CD4-positive, alpha-beta memory T cell (primary cell): ENCODE measurements at regions of chr1 and their contacts with region 1.

Region 1: GRCh38 chr1:161165742-161166668 is at the start of gene PPOX:
- DNase-seq: peak; percentile 95 to 98 (median 96)
- H3K4me3 ChIP-seq: peak within 1 kb of the TSS; percentile 73 to 77
- H3K4me3 Mint-ChIP-seq: peak within 1 kb of the TSS; percentile 89 to 96 (median 94)
- H3K27ac ChIP-seq: peak within 1 kb of the TSS; percentile 83
- H3K27ac Mint-ChIP-seq: peak within 1 kb of the TSS; percentile 96 to 100 (median 100)
- H3K4me1 ChIP-seq: peaks cover 37% of the 10 kb centered on the region
- H3K4me1 Mint-ChIP-seq: peaks cover 25 to 75% (median 45%) of the 10 kb centered on the region in 4 donors
- H3K27me3 ChIP-seq: no peaks in the 10 kb centered on the region
- H3K27me3 Mint-ChIP-seq: no peaks in the 10 kb centered on the region
- total RNA-seq, gene PPOX: 59.4 to 69.8 TPM

Region 2: DNA sequence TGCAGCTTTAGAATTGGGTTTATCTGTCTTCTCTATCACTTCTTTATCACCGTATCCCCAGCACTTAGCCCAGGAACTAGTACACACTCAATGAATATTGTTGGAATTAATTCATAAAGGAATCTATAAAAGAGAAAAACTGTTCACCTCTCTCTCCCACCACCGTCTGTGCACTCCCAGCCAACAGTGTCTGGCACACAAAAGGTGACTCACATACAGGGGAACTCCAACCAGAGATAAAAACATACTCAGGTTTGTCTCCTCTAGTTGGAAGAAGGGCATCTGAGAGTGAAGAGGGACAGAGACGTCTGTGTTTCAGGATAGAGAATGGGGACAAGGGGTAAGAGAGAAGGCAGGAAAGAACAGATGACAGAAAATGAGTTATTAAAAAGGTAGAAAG is 291.1 kb before region 1 on chr1:
- CTCF ChIA-PET with region 1: no interaction called
- POLR2A ChIA-PET with region 1: no interaction called
- intact Hi-C with region 1: no loop called
- DNase-seq: no peak
- H3K4me3 ChIP-seq: no peak overlapping the region
- H3K4me3 Mint-ChIP-seq: no peak overlapping the region
- H3K27ac ChIP-seq: no peak overlapping the region
- H3K27ac Mint-ChIP-seq: peak overlapping the region in 1 of 7 donors; percentile 5
- H3K4me1 ChIP-seq: peaks cover 7% of the 10 kb centered on the region
- H3K4me1 Mint-ChIP-seq: peaks cover 5 to 22% (median 6%) of the 10 kb centered on the region in 4 donors
- H3K27me3 ChIP-seq: no peaks in the 10 kb centered on the region
- H3K27me3 Mint-ChIP-seq: peaks cover 0 to 6% of the 10 kb centered on the region in 2 donors

Region 3: DNA sequence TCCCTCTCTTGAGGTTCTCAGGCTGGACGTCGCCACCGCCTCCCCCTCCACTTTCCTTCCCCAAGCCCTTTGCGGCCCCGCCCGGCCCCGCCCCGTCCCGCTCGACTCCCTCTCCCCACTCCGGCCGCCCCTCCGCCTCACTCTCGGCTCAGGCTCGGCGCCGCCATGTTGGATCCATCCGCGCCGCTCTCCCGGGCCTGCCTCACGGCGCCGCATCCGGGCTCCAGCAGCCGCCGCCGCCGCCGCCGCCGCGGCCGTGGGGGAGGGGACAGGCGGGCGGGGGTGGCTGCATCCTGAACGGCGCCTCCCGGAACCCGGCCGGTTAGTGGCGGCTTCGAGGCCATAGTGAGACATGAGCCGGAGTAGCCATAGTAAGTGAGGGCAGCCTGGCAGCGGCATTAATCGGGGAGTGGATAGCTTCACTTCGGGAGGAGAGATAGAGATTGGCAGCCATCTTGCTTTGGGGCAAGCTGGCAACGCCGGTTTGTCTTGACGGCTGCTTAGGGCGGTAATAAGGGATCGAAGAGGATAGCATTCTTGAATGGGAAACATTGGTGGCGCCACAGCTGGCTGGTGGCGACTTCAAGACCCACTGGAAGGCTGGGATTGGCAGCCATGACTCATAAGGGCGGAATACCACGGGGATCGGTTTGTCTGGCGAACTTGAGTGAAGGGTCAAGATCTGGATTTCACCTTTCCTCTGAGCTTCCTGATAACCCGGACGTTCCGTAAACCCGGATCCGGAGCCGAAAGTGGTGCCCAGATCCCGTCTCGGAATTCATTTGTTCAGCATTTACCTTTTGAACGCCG is 33.4 kb before region 1 on chr1 and contains the start of gene DEDD:
- CTCF ChIA-PET with region 1: interaction called, 8 read pairs
- POLR2A ChIA-PET with region 1: interaction called, 30 read pairs
- intact Hi-C with region 1: loop called (anchors 1 kb)
- DNase-seq: peak; percentile 92 to 95 (median 93)
- H3K4me3 ChIP-seq: peak within 1 kb of the TSS; percentile 80 to 100
- H3K4me3 Mint-ChIP-seq: peak within 1 kb of the TSS in 1 of 8 donors; percentile 91
- H3K27ac ChIP-seq: peak within 1 kb of the TSS; percentile 95
- H3K27ac Mint-ChIP-seq: peak within 1 kb of the TSS in 3 of 7 donors; percentile 91 to 99 (median 95)
- H3K4me1 ChIP-seq: peaks cover 51% of the 10 kb centered on the region
- H3K4me1 Mint-ChIP-seq: peaks cover 29 to 43% (median 40%) of the 10 kb centered on the region in 4 donors
- H3K27me3 ChIP-seq: no peaks in the 10 kb centered on the region
- H3K27me3 Mint-ChIP-seq: no peaks in the 10 kb centered on the region
- total RNA-seq, gene DEDD: 39.1 to 41.4 TPM

Region 4: DNA sequence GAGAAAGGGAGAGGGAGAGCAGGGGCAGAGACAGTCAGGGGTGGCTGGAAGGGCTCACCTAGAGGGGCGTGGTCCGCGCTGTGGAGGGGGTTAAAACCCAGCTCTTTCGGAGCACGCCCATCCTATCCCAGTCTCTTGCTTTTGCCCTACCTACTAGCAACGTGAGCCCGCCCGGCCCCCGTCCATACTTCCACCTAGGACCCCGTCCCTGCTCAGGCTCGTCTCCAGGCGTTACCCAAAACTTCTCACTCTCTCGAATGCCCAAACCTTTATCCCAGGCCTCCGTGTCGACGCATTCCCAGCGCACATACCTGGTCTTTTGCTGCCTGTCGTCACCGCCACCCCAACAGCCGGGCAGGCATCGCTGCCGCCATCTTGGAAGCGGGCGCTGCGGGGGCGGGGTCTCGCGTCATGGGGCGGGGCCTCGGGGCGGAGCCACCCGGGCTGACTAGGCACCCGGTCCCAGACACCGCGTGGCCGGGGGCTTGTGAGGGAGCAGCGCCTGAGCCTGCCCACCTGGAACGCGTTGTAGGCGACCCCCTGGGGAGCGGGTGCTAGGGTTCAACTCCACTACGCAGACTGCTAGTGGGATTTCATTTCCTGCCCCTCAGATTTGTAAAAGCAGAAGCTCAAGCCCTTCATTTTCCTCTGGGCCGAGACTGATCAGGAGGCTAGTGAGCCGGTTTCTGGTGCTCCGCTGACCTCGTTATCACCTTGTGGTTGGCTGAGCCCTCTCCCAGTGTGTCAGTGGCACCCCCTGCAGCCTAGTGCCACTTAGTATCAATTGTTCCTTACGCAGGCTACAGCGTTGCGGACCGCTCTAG is 11.3 kb after region 1 on chr1 and contains the start of gene B4GALT3:
- CTCF ChIA-PET with region 1: interaction called, 98 read pairs
- POLR2A ChIA-PET with region 1: interaction called, 132 read pairs
- intact Hi-C with region 1: loop called (anchors 1 kb)
- DNase-seq: peak; percentile 89 to 94 (median 90)
- H3K4me3 ChIP-seq: peak within 1 kb of the TSS; percentile 90 to 97
- H3K4me3 Mint-ChIP-seq: peak within 1 kb of the TSS; percentile 98 to 100 (median 100)
- H3K27ac ChIP-seq: peak within 1 kb of the TSS; percentile 85
- H3K27ac Mint-ChIP-seq: peak within 1 kb of the TSS; percentile 95 to 100 (median 99)
- H3K4me1 ChIP-seq: peaks cover 56% of the 10 kb centered on the region
- H3K4me1 Mint-ChIP-seq: peaks cover 45 to 85% (median 68%) of the 10 kb centered on the region in 4 donors
- H3K27me3 ChIP-seq: no peaks in the 10 kb centered on the region
- H3K27me3 Mint-ChIP-seq: no peaks in the 10 kb centered on the region
- total RNA-seq, gene B4GALT3: 64.6 to 71.5 TPM

Region 5: DNA sequence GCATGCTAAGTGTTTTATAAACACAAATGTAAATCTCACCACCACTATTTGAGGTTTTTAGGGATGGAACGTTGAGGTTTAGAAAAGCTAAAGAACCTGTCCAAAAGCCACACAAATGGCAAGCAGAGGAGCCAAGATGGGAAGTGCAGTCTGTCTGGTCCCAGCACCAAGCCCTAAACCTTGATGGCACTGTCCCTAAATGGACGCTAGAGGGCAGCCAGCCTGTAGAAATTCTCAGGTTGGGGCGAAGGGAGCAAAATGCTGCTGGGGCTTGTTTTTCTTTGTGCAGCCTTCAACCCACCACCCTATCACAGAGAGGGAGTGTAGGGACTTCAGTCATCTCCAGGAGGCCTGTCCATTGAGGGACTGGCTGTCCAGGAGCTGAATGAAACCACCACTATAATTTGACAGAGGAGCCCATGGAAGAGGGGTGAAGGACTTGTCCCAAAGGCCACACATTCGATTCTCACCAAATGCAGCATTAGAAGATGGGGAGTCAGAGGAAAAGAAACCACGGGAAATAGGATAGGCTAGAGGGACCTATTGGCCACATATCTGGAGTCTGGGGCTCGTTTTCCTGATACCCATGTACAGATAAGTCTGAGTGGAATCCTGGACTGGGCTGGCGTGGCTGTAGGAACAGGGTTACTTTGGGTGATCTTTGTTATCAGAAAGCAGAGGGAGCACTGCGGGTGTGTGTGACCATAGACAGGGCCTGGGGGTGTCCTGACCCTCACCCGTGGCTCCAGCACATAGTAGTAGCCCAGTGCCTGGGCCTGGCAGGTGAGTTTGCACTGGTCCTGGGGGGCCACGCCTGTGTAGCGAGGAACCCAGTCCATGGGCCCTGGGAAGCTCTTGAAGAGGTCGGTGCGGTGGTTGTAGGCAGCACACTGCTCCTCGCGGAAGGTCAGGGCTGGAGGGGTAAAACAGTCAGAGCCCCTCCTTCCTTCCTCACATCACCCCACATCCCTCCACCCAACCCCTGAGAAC is 26.8 kb after region 1 on chr1:
- CTCF ChIA-PET with region 1: interaction called, 115 read pairs
- POLR2A ChIA-PET with region 1: interaction called, 37 read pairs
- intact Hi-C with region 1: no loop called
- DNase-seq: peak; percentile 66 to 74 (median 71)
- H3K4me3 ChIP-seq: no peak overlapping the region
- H3K4me3 Mint-ChIP-seq: peak overlapping the region in 4 of 8 donors; percentile 17 to 53 (median 32)
- H3K27ac ChIP-seq: no peak overlapping the region
- H3K27ac Mint-ChIP-seq: peak overlapping the region; percentile 14 to 92 (median 82)
- H3K4me1 ChIP-seq: peaks cover 47% of the 10 kb centered on the region
- H3K4me1 Mint-ChIP-seq: peaks cover 22 to 43% (median 32%) of the 10 kb centered on the region in 4 donors
- H3K27me3 ChIP-seq: no peaks in the 10 kb centered on the region
- H3K27me3 Mint-ChIP-seq: no peaks in the 10 kb centered on the region

Region 6: GRCh38 chr1:161287482-161288054 is 121.6 kb after region 1 on chr1:
- CTCF ChIA-PET with region 1: interaction called, 12 read pairs
- POLR2A ChIA-PET with region 1: interaction called, 5 read pairs
- intact Hi-C with region 1: no loop called
- DNase-seq: no peak
- H3K4me3 ChIP-seq: no peak overlapping the region
- H3K4me3 Mint-ChIP-seq: no peak overlapping the region
- H3K27ac ChIP-seq: no peak overlapping the region
- H3K27ac Mint-ChIP-seq: no peak overlapping the region
- H3K4me1 ChIP-seq: no peaks in the 10 kb centered on the region
- H3K4me1 Mint-ChIP-seq: peaks cover 0 to 4% (median under 1%) of the 10 kb centered on the region in 4 donors
- H3K27me3 ChIP-seq: peaks cover 3% of the 10 kb centered on the region
- H3K27me3 Mint-ChIP-seq: peaks cover 0 to 7% of the 10 kb centered on the region in 2 donors

Region 7: GRCh38 chr1:161382214-161383019 is 216.4 kb after region 1 on chr1:
- CTCF ChIA-PET with region 1: interaction called, 20 read pairs
- POLR2A ChIA-PET with region 1: interaction called, 5 read pairs
- intact Hi-C with region 1: no loop called
- DNase-seq: peak in 4 of 5 donors; percentile 48 to 61 (median 56)
- H3K4me3 ChIP-seq: no peak overlapping the region
- H3K4me3 Mint-ChIP-seq: no peak overlapping the region
- H3K27ac ChIP-seq: no peak overlapping the region
- H3K27ac Mint-ChIP-seq: peak overlapping the region in 3 of 7 donors; percentile 3 to 76 (median 7)
- H3K4me1 ChIP-seq: peaks cover 17% of the 10 kb centered on the region
- H3K4me1 Mint-ChIP-seq: peaks cover 7 to 14% (median 13%) of the 10 kb centered on the region in 4 donors
- H3K27me3 ChIP-seq: no peaks in the 10 kb centered on the region
- H3K27me3 Mint-ChIP-seq: no peaks in the 10 kb centered on the region